Sigmoid colon (tissue), 7 donors: ENCODE measurements at regions of chr13 and their contacts with region 1.

Region 1: GRCh38 chr13:110350509-110350908 is 43.4 kb downstream of the COL4A2 start:
- DNase-seq: no peak
- H3K4me3 ChIP-seq: no peak overlapping the region
- H3K27ac ChIP-seq: peak overlapping the region; percentile 88 to 100 (median 94)
- H3K4me1 ChIP-seq: peaks cover 0 to 92% (median 83%) of the 10 kb centered on the region in 4 donors
- H3K27me3 ChIP-seq: no peaks in the 10 kb centered on the region
- CTCF ChIP-seq: no peak
- EP300 ChIP-seq: no peak
- POLR2A ChIP-seq: no peak

Region 2: GRCh38 chr13:110283736-110284517 is 66.6 kb before region 1 on chr13:
- intact Hi-C with region 1: no loop called
- DNase-seq: peak; percentile 60
- H3K4me3 ChIP-seq: no peak overlapping the region
- H3K27ac ChIP-seq: peak overlapping the region; percentile 68 to 100 (median 87)
- H3K4me1 ChIP-seq: peaks cover 0 to 92% (median 90%) of the 10 kb centered on the region in 4 donors
- H3K27me3 ChIP-seq: no peaks in the 10 kb centered on the region
- CTCF ChIP-seq: no peak
- EP300 ChIP-seq: no peak
- POLR2A ChIP-seq: no peak

Region 3: GRCh38 chr13:110387391-110388107 is 37.0 kb after region 1 on chr13:
- intact Hi-C with region 1: loop called (anchors 2 kb)
- DNase-seq: peak; percentile 91
- H3K4me3 ChIP-seq: peak overlapping the region in 3 of 4 donors; percentile 7 to 13 (median 8)
- H3K27ac ChIP-seq: peak overlapping the region; percentile 90 to 96 (median 93)
- H3K4me1 ChIP-seq: peaks cover 0 to 59% (median 45%) of the 10 kb centered on the region in 4 donors
- H3K27me3 ChIP-seq: no peaks in the 10 kb centered on the region
- CTCF ChIP-seq: no peak
- EP300 ChIP-seq: peak in 2 of 4 donors; percentile 14 to 72
- POLR2A ChIP-seq: peak in 1 of 2 donors; percentile 50